GM13976 (cell line): ENCODE measurements at regions of chr17 and their contacts with region 1.

Region 1: DNA sequence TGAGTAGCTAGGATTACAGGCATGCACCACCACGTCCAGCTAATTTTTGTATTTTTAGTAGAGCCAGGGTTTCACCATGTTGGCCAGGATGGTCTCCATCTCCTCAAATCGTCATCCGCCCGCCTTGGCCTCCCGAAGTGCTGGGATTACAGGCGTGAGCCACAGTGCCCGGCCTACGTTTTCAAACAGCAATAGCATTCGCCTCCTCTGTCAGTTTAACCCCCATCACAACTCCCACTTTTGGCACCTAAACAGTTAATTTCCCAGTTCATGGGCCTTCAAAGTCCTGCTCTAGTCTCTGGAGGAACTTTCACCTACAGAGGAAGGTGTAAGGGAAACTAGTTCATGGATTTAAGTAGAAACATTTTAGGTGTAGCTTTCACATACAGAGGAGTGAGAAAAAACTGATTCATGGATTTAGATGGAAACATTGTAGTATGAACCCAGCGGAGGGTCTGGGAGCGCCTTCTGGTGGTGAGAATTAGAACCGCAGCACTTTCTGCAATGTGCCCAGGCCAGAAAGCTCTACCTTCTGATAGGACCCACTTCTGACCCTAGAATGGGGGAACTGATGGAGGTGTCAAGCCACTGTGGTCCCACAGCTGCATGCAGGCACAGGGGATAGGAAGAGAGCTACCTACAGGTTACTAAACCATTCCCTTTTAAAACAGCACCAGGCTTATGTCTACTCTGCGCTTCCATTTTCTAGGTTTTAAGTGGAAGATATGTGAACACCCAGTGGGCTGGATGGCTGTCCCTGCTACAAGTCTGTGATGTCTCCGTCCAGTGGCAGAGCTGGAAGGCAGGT is 12.0 kb upstream of the MEOX1 start:
- DNase-seq: peak; percentile 73
- CTCF ChIP-seq: peak; percentile 85

Region 2: GRCh38 chr17:43388359-43389045 is 285.2 kb before region 1 on chr17:
- in situ Hi-C with region 1: loop called (anchors 25 kb)
- DNase-seq: peak; percentile 88
- CTCF ChIP-seq: no peak

Region 3: DNA sequence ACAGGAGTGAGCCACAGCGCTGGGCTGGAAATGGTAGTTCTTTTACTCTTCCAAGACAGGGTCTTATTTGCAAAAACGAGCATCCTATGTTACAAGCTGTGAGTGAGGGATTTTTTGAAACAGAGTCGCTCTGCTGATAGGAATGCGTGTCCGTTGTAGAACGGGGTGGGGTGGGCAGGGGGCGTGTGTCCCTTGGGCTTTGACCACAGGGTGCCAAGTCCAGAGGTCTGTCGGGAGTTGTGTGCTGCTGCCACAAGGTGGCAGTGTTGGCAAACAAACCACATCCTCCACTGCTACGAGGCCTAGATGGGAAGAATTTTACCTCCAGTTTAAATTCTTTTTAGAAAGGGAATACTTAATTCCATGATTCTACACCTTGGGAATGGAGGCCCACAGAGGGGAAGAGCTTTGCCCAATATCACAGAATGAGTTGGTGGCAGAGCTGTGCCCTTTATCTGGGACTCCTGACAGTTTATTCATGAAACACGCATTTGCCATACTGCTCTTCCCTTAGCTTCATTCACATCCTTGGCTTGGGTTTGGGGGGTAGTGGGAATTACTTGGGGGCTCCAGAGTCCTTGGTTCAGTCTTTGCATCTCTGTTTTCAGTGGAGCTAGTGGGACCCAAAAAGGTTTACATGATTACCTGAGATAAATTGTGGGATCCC is 97.0 kb before region 1 on chr17:
- in situ Hi-C with region 1: loop called (anchors 5 kb)
- DNase-seq: peak; percentile 74
- CTCF ChIP-seq: peak; percentile 85

Region 4: GRCh38 chr17:43745541-43745940 is 71.8 kb after region 1 on chr17:
- in situ Hi-C with region 1: no loop called
- DNase-seq: no peak
- CTCF ChIP-seq: no peak